HEK293 (cell line): ENCODE measurements at regions of chr5 and their contacts with region 1.

Region 1: DNA sequence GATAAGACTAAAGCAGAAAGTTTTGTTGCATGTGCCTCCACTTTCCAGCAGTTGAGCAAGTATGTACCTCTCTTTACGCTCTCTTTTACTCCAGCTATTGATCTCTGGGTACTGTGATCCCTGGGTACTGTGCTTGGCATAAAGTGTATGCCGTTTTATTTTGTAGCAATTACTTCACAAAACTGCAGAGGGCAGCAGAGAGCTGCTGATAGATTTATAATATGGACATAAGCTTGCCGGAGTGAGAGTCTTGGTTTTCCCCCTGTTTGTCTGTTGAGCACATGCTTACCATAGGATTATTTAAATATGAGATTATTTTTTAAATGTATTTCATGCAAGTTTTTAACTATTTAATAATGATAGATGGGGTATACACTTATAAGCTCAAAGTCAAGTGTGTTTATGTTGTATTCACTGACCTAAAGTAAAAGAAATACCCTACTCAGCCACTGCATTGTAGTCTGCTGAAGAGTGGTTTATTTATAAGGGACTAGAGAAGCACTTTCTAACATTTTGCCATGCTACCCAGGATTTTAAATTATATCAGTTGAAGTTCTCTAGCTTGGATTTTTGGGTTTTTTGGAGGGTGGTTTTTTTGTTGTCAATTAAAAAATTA is 13.0 kb downstream of the TTC1 start:
- H3K4me3 ChIP-seq: no peak overlapping the region
- H3K27ac ChIP-seq: no peak overlapping the region
- H3K4me1 ChIP-seq: 0 out of 2 replicates have a peak, but pooled peaks cover 9% of the 10 kb centered on the region
- CTCF ChIP-seq: peak; percentile 43

Region 2: DNA sequence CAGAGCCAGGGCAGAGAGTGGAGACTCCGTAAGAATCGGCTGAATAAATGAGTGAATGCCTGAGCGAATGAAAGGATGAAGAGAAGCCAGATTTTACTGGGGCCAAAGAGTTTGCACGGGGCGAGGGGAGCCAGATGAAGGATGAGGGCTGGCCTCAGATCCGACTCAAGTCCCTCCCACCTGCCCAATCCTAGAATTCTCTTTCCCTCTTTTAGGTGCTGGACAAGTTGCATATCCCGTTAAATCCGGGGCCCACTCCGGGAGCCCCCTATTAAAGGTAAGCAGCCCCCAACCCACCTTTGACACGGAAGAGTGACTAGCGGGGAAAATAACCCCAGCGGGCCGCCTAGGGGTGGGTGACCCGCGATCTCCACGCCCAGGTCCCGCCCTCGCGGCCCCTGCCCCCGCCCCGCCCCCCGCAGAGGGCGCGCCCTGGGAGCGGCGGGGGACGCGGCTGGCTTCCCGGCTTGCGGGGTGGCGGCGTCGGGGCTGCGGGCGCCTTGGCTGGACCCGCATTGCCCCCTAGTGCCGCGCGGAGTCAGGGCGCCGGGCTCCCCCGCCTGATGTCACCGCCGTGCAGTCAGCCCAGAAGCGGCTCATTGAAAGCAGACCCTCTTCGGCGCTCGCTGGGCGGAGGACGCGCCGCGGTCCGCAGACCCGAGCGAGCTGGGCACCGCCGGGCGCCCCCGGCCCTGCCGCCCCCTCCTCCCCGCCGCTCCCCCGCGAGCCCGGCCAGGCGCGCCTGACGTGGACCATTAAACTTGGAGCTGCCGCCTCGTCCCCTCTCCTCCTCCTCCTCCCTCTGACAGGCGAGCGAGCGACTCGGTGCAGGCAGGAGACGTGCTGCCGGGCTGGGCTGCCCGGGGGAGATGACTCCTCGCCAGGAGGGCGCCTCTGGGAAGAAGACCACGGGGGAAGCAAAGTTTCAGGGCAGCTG is 105.8 kb before region 1 on chr5 and contains the start of gene ADRA1B:
- CTCF ChIA-PET with region 1: no interaction called
- POLR2A ChIA-PET with region 1: no interaction called
- H3K4me3 ChIP-seq: peak within 1 kb of the TSS; percentile 41
- H3K27ac ChIP-seq: peak within 1 kb of the TSS; percentile 7; the same call in 1 of the 2 replicates
- H3K4me1 ChIP-seq: no peaks in the 10 kb centered on the region; the same call in 1 of the 2 replicates
- CTCF ChIP-seq: peak; percentile 31; the same call in 1 of the 2 replicates

Region 3: DNA sequence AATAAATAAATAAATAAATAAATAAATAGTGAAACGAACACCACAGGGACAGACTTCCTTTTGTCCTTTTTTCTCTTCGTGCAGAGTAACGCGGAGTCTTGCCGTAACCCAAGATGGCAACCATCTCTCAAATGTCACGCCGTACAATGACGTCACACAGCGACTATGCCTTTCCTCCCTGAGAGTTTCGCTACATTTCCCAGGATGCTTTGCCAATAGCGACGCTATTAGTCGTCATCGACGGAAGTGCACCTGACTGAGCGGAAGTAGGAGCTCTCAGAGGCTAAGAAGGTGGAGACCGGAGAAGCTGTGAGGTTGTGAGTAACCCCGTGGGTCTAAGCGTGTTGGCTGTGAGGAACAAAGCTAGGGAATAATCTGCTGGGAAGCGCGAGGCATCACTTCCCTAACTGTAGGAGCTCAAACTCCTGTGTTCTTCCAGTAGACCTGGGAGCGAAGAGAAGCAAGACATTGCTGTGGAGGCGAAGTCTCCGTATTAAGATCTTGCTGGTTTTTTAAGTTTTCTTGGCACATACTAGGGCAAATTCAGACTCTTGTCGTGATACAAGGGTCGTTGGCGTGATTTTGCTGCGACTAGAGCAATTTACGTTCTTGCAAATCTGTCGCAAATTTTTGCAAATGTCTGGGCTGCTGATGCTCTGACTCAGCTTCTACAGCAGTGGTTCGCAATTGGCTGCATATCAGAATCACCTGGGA is 12.9 kb before region 1 on chr5 and contains the start of gene TTC1:
- CTCF ChIA-PET with region 1: interaction called, 15 read pairs
- POLR2A ChIA-PET with region 1: interaction called, 9 read pairs
- H3K4me3 ChIP-seq: peak within 1 kb of the TSS; percentile 99
- H3K27ac ChIP-seq: peak within 1 kb of the TSS; percentile 50
- H3K4me1 ChIP-seq: peaks cover 11% of the 10 kb centered on the region
- CTCF ChIP-seq: no peak

Region 4: GRCh38 chr5:160036243-160036642 is 14.3 kb after region 1 on chr5:
- CTCF ChIA-PET with region 1: interaction called, 25 read pairs
- POLR2A ChIA-PET with region 1: no interaction called
- H3K4me3 ChIP-seq: no peak overlapping the region
- H3K27ac ChIP-seq: no peak overlapping the region
- H3K4me1 ChIP-seq: no peaks in the 10 kb centered on the region
- CTCF ChIP-seq: no peak

Region 5: DNA sequence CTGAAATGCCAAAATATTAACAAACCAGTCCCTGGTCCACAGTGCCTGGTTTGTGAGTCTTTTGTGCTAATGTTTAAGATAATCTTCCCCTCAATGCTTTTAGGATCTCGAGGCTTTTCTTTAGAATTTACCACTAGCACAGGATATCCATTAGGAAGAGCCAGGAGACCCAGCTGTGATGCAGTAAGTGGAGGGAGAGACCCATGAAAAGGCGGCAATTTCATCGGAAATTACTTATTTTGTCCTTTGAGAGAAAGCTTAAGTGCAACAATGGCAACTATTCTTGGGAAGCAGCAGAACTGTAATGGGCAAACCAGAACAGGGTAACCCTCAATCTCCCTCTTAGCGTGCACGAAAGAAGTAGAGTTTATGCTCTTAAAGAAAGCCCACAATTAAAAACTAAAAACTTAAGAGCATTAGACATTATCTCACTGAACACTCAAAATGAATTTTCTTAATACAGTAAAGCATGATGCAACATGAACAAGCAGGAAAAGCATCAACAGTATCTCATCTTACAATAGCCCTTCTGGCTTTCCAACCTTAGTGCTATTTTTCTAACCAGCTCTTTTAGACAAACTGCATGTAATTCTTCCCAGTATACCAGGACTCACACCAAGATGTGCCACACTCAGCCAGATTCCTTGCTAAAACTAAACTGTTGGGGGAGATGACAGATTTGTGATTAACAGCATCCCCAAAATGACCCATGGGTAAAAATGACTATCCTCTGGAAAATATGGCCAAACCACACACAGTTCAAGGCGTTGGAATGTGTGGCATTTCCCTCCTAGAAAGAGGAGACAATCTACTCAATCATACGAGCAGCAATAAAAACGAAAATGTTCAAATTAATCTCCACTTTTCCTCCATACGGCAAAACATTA is 60.9 kb after region 1 on chr5:
- CTCF ChIA-PET with region 1: interaction called, 17 read pairs
- POLR2A ChIA-PET with region 1: no interaction called
- H3K4me3 ChIP-seq: no peak overlapping the region
- H3K27ac ChIP-seq: no peak overlapping the region
- H3K4me1 ChIP-seq: peaks cover 4% of the 10 kb centered on the region
- CTCF ChIP-seq: no peak

Region 6: GRCh38 chr5:160199410-160199911 is 177.5 kb after region 1 on chr5:
- CTCF ChIA-PET with region 1: interaction called, 10 read pairs
- POLR2A ChIA-PET with region 1: no interaction called
- H3K4me3 ChIP-seq: no peak overlapping the region
- H3K27ac ChIP-seq: no peak overlapping the region
- H3K4me1 ChIP-seq: no peaks in the 10 kb centered on the region
- CTCF ChIP-seq: peak; percentile 35; the same call in 1 of the 2 replicates

Region 7: DNA sequence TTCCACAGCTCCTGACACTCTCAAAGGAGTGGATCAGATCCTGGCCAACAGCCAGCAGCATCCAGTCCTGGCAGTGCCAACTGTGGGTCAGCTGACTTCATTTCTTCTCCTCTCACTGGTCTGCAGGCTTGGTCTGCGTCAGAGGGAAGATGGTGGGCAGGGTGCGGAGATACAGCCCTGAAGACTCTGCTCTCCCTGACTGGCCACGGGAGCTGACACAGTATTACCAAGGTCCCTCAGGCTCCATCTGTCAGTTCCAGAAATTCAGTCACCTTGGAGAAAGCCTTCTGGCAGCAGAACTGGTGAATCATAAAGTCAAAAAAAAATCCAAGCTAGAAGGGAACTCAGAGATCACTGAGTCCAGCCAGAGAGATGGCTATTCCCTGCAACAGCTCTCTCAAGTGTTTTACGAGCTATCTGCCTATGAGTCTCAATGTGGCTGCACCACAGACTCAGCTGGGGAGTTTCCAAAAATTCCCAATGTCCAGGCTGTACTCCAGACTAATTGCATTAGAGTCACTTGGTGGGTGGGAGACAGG is 320.5 kb after region 1 on chr5:
- CTCF ChIA-PET with region 1: interaction called, 66 read pairs
- POLR2A ChIA-PET with region 1: no interaction called
- H3K4me3 ChIP-seq: no peak overlapping the region
- H3K27ac ChIP-seq: no peak overlapping the region
- H3K4me1 ChIP-seq: no peaks in the 10 kb centered on the region
- CTCF ChIP-seq: no peak

Region 8: GRCh38 chr5:160390787-160391696 is 369.1 kb after region 1 on chr5:
- CTCF ChIA-PET with region 1: interaction called, 21 read pairs
- POLR2A ChIA-PET with region 1: interaction called, 3 read pairs
- H3K4me3 ChIP-seq: no peak overlapping the region
- H3K27ac ChIP-seq: no peak overlapping the region
- H3K4me1 ChIP-seq: no peaks in the 10 kb centered on the region
- CTCF ChIP-seq: no peak